Activated CD8-positive, alpha-beta T cell treated with anti-CD3 and anti-CD28 coated beads, Interleukin-2, amount 10 ng/mL, durations not matched to agents 7 days and 5 days (primary cell): ENCODE measurements at regions of chr19 and their contacts with region 1.

Region 1: DNA sequence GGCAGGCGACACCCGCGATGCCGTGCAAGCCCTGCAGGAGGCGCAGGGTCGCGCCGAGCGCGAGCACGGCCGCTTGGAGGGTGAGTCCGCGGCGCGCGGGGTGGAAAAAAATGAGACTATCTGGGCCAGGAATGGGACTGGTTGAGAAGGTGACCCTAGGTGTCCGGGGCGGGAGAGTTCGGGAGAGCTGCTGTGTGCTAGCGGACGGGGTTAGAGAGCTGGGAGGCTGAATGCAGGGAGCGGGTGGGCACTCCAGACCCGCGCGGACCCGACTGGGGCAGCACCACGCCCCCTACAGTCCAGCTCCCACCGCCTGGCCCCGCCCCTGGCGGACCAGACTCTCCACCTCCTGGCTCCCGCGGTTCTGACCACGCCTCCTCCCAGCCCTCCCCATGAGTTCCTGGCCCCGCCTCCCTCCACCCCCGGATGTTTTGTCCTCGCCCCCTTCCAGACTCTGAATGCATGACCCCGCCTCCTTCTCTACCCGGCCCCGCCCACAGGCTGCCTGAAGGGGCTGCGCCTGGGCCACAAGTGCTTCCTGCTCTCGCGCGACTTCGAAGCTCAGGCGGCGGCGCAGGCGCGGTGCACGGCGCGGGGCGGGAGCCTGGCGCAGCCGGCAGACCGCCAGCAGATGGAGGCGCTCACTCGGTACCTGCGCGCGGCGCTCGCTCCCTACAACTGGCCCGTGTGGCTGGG is 1.5 kb downstream of the CLEC11A start:
- DNase-seq: peak; percentile 99
- ATAC-seq: peak; percentile 88
- H3K4me3 Mint-ChIP-seq: peak overlapping the region; percentile 77
- H3K27ac Mint-ChIP-seq: peak overlapping the region; percentile 89
- H3K4me1 Mint-ChIP-seq: peaks cover 34% of the 10 kb centered on the region
- H3K27me3 Mint-ChIP-seq: peaks cover 35% of the 10 kb centered on the region

Region 2: DNA sequence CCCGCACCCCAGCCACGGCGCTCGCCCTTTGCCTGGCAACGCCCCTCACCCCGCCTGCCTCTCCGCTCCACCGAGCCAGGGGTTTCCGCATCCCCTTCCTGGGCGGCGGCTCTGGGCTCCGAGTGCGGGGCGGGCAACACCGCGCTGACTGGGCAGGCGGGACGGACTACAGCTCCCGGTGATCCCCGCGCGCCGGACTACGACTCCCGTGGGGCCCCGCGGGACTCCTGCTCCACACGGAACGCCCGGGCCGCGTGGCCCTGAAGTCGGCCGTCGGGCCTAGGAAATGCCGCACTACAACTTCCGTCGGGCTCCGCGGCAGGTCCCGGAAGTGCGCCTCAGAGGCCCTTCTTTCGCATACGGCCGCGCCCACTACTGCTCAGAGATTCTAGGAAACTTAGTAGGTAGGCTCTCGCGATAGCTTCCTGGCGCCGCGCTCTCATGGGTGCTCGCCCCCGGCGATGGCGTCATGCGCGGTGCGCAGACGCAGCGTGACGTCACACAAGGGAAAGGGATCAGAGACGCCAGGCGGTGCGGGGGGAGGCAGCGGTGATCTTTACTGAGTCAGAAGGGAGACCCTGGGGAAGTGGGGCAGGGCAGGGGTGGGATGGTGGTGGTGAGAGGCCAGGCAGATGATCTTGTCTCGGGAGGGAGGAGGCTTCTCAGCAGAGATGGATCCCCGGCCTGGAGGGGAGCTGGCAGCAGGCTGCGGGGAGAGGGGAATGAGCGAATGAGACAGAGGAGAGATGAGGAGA is 213.4 kb before region 1 on chr19 and contains the start of gene JOSD2:
- CTCF ChIA-PET with region 1: no interaction called
- POLR2A ChIA-PET with region 1: no interaction called
- DNase-seq: peak; percentile 99
- ATAC-seq: peak; percentile 97
- H3K4me3 Mint-ChIP-seq: peak within 1 kb of the TSS; percentile 94
- H3K27ac Mint-ChIP-seq: peak within 1 kb of the TSS; percentile 97
- H3K4me1 Mint-ChIP-seq: peaks cover 22% of the 10 kb centered on the region
- H3K27me3 Mint-ChIP-seq: no peaks in the 10 kb centered on the region
- total RNA-seq, gene JOSD2: 49.8 to 51.3 TPM

Region 3: DNA sequence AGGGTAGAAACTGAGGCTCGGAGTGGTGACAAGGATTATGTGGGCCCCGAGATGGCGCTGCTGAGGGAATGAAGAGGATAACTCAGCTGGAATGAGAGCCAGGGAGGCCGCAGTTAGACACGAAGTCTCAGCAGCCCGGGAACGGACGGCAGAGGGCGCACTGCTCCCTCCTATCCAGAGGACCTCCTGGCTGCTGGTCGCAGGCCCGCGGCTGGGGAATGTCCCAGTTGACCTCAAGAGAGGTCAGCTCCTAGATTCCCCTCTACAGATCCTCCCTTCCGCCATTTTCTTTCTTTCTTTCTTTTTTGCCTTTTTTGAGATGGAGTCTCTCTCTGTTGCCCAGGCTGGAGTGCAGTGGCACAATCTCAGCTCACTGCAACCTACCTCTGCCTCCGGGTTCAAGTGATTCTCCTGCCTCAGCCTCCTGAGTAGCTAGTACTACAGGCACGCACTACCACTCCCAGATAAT is 186.9 kb before region 1 on chr19:
- CTCF ChIA-PET with region 1: no interaction called
- POLR2A ChIA-PET with region 1: no interaction called
- DNase-seq: peak; percentile 72
- ATAC-seq: peak; percentile 65
- H3K4me3 Mint-ChIP-seq: no peak overlapping the region
- H3K27ac Mint-ChIP-seq: no peak overlapping the region
- H3K4me1 Mint-ChIP-seq: no peaks in the 10 kb centered on the region
- H3K27me3 Mint-ChIP-seq: no peaks in the 10 kb centered on the region

Region 4: DNA sequence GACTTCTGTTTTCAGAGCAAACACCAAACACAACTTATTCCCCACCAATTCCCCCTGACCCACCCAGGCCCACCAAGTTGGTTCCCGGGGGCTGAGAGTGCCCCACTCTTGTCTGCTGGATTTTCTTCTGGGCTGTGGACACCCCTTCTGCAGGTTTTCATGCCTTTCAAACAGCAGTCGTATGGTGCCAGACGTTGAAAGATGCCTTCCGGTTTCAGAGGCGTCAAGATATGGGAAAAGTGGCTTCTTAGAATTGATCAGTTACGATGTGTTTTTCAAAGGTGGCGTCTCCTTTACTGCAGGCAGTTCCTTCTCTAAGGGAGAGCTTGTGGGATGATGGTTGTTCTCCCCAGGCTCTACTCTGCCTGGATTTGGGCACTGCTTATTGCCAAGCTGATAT is 11.2 kb after region 1 on chr19:
- CTCF ChIA-PET with region 1: interaction called, 11 read pairs
- POLR2A ChIA-PET with region 1: no interaction called
- DNase-seq: no peak
- ATAC-seq: no peak
- H3K4me3 Mint-ChIP-seq: no peak overlapping the region
- H3K27ac Mint-ChIP-seq: no peak overlapping the region
- H3K4me1 Mint-ChIP-seq: no peaks in the 10 kb centered on the region
- H3K27me3 Mint-ChIP-seq: peaks cover 9% of the 10 kb centered on the region

Region 5: DNA sequence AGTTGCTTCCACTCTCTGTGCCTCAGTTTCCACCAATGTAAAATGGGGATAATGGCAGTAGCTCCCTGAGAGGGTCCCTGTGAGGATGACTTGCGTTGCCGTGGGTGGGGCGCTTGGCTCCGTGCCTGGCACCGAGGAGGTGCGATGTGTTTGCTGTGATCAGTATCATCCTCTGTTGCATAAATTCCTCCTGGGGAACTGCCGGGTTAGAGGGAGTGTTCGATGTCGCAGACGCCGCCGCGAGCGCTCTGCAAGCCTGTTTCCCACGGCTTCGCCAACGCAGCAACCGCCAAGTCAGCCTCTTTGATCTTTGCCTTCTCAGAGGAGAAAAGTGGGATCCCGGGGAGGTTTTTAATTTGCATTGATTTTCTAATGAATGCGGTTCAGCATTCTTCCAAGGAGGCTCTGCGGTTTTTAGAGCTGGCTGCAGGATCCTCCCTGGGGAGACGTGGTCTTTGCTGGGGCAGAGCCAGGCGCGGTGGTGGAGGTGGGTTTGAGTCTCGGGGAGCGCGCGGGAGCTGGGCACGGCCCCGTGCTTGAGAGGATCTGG is 53.2 kb after region 1 on chr19:
- CTCF ChIA-PET with region 1: interaction called, 15 read pairs
- POLR2A ChIA-PET with region 1: no interaction called
- DNase-seq: no peak
- ATAC-seq: no peak
- H3K4me3 Mint-ChIP-seq: no peak overlapping the region
- H3K27ac Mint-ChIP-seq: no peak overlapping the region
- H3K4me1 Mint-ChIP-seq: no peaks in the 10 kb centered on the region
- H3K27me3 Mint-ChIP-seq: peaks cover 34% of the 10 kb centered on the region